K562 (cell line): ENCODE measurements at regions of chr14 and their contacts with region 1.

Region 1: GRCh38 chr14:99982537-99983250 is 82.5 kb upstream of the EVL start:
- DNase-seq: peak; percentile 57 to 75 (median 64)
- ATAC-seq: peak; percentile 95
- H3K4me3 ChIP-seq: no peak overlapping the region
- H3K27ac ChIP-seq: no peak overlapping the region
- H3K4me1 ChIP-seq: peaks cover 2 to 7% of the 10 kb centered on the region in 2 experiments; a peak in 3 of 5 replicates
- H3K27me3 ChIP-seq: no peaks in the 10 kb centered on the region
- CTCF ChIP-seq: peak; percentile 72 to 80 (median 75)
- EP300 ChIP-seq: no peak
- POLR2A ChIP-seq: no peak
- RAD21 ChIP-seq: peak; percentile 80 to 86

Region 2: GRCh38 chr14:100025111-100025510 is 42.4 kb after region 1 on chr14:
- CTCF ChIA-PET with region 1: interaction called, 5 read pairs
- POLR2A ChIA-PET with region 1: no interaction called
- in situ Hi-C with region 1: no loop called
- intact Hi-C with region 1: loop called (anchors 1 kb)
- DNase-seq: peak; percentile 52 to 79 (median 60)
- ATAC-seq: peak; percentile 98
- H3K4me3 ChIP-seq: no peak overlapping the region
- H3K27ac ChIP-seq: peak overlapping the region; percentile 23; the same call in 2 of the 3 replicates
- H3K4me1 ChIP-seq: peaks cover 13 to 21% of the 10 kb centered on the region in 2 experiments
- H3K27me3 ChIP-seq: no peaks in the 10 kb centered on the region
- CTCF ChIP-seq: peak; percentile 67 to 79 (median 75)
- EP300 ChIP-seq: no peak
- POLR2A ChIP-seq: no peak
- RAD21 ChIP-seq: peak; percentile 74 to 81

Region 3: GRCh38 chr14:100122481-100123222 is 140.0 kb after region 1 on chr14:
- CTCF ChIA-PET with region 1: no interaction called
- POLR2A ChIA-PET with region 1: no interaction called
- in situ Hi-C with region 1: loop called (anchors 10 kb)
- intact Hi-C with region 1: no loop called
- DNase-seq: peak in 3 of 4 experiments; percentile 29 to 35 (median 33)
- ATAC-seq: peak; percentile 87
- H3K4me3 ChIP-seq: no peak overlapping the region
- H3K27ac ChIP-seq: no peak overlapping the region
- H3K4me1 ChIP-seq: no peaks in the 10 kb centered on the region; a peak in 1 of 5 replicates
- H3K27me3 ChIP-seq: no peaks in the 10 kb centered on the region
- CTCF ChIP-seq: peak; percentile 43 to 51 (median 48)
- EP300 ChIP-seq: no peak
- POLR2A ChIP-seq: no peak
- RAD21 ChIP-seq: peak; percentile 24 to 46; a peak in 3 of 4 replicates

Region 4: DNA sequence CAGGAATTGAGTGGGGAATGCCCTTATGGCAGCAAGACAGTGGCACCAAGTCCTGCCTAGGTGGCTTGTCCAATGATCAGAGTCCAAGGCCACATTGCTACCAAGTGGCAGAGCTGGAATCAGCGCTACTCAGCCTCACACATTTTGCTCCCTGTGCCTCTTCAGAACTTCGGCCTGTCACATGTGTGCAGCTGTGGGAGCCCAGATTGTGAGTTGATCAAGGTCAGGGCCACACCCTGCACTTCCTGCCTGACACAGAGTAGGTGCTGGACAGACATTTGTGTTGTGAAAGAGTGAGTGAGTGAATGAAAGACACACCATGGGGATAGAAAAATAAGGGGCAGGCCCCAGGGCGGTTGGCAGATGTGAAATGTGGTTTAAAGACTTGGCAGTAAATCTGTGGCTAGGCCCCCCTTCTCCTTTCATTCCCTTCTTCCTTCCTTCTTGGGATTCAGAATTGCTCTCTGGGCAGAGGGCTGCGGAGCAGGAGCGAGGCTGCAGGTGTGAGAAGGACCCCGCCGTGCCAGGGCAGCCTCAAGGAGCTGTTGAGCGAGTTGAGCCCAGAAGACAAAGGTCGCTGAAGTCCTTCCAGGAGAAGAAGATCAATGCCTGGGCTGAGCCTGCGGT is 423.9 kb after region 1 on chr14:
- CTCF ChIA-PET with region 1: no interaction called
- POLR2A ChIA-PET with region 1: no interaction called
- in situ Hi-C with region 1: no loop called
- intact Hi-C with region 1: no loop called
- DNase-seq: peak; percentile 45 to 82 (median 57)
- ATAC-seq: peak; percentile 89
- H3K4me3 ChIP-seq: no peak overlapping the region
- H3K27ac ChIP-seq: peak overlapping the region; percentile 47; the same call in 2 of the 3 replicates
- H3K4me1 ChIP-seq: peaks cover 34 to 52% of the 10 kb centered on the region in 2 experiments
- H3K27me3 ChIP-seq: no peaks in the 10 kb centered on the region
- CTCF ChIP-seq: no peak
- EP300 ChIP-seq: no peak
- POLR2A ChIP-seq: no peak
- RAD21 ChIP-seq: no peak